ENCODE measurements at regions of chr15 and their contacts with region 1.

Region 1: DNA sequence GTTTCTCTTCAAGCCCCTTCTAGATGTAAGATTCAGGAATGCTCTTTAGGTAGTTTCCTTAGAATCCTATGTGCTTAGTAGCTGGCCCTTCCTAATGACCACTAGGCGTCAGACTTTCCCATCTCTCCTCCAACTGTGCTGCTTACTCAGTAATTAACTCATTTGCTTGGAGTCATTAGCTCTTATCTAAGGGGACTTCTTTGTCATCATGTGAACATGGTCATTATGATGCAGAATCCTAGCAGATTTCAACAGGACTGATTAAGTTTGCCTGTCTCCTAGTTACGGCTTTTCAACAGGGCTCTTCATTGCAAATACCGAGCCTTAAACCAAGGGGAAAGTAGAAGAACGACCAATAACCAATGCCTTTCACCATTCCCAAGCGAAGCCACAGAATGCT is 46.4 kb downstream of the GJD2 start:
- DNase-seq: peak; percentile 69
- H3K4me3 ChIP-seq: no peak overlapping the region
- H3K27ac ChIP-seq: no peak overlapping the region
- H3K4me1 ChIP-seq: no peaks in the 10 kb centered on the region
- H3K27me3 ChIP-seq: no peaks in the 10 kb centered on the region
- CTCF ChIP-seq: peak; percentile 64 to 71
- POLR2A ChIP-seq: no peak

Region 2: GRCh38 chr15:34610354-34610753 is 98.1 kb before region 1 on chr15:
- CTCF ChIA-PET with region 1: interaction called, 17 read pairs
- POLR2A ChIA-PET with region 1: no interaction called
- dilution Hi-C with region 1: no loop called
- intact Hi-C with region 1: no loop called
- DNase-seq: peak; percentile 39
- H3K4me3 ChIP-seq: no peak overlapping the region
- H3K27ac ChIP-seq: no peak overlapping the region
- H3K4me1 ChIP-seq: peaks cover 15% of the 10 kb centered on the region
- H3K27me3 ChIP-seq: no peaks in the 10 kb centered on the region
- CTCF ChIP-seq: peak in 1 of 2 donors; percentile 18
- POLR2A ChIP-seq: no peak

Region 3: DNA sequence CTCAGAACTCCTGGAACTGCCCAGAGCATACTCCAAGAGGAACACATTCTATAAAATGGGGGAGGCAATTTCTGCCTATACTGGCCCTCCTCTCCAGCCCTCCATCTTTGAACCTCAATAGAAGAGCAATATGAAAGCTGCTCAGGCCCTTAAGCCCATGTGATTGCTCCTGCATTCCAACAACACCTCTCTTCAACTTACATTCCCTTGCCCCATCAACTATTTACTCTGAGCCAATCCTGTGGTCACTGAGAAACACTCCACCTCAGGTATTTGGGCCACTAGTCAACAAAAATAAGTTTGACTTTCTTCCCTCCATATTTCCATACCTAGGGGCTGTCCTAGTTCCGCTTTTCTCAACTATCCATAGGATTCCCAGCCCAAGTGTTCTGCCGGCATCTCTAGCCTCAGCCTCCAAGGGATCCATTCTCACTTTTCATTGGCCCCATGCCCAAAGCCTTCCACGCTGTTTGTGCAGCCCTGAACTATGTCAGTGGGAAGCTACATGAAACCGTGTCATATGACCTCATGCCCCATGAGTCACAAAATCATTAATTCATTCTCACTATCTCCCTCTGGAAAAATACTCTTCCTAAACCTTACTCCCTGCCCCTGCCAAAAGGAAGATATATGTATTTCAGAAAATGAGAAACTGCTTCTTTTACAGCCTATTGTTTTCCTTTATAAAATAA is 15.2 kb before region 1 on chr15:
- CTCF ChIA-PET with region 1: interaction called, 18 read pairs
- POLR2A ChIA-PET with region 1: no interaction called
- dilution Hi-C with region 1: no loop called
- intact Hi-C with region 1: no loop called
- DNase-seq: peak; percentile 66
- H3K4me3 ChIP-seq: no peak overlapping the region
- H3K27ac ChIP-seq: no peak overlapping the region
- H3K4me1 ChIP-seq: peaks cover 7% of the 10 kb centered on the region
- H3K27me3 ChIP-seq: no peaks in the 10 kb centered on the region
- CTCF ChIP-seq: no peak
- POLR2A ChIP-seq: no peak

Region 4: GRCh38 chr15:34855397-34855796 is 147.0 kb after region 1 on chr15:
- CTCF ChIA-PET with region 1: interaction called, 8 read pairs
- POLR2A ChIA-PET with region 1: no interaction called
- dilution Hi-C with region 1: no loop called
- intact Hi-C with region 1: loop called (anchors 10 kb)
- DNase-seq: peak; percentile 91
- H3K4me3 ChIP-seq: no peak overlapping the region
- H3K27ac ChIP-seq: peak overlapping the region; percentile 5
- H3K4me1 ChIP-seq: peaks cover 28% of the 10 kb centered on the region
- H3K27me3 ChIP-seq: no peaks in the 10 kb centered on the region
- CTCF ChIP-seq: no peak
- POLR2A ChIP-seq: no peak

Region 5: GRCh38 chr15:34927726-34928125 is 219.3 kb after region 1 on chr15:
- CTCF ChIA-PET with region 1: interaction called, 56 read pairs
- POLR2A ChIA-PET with region 1: no interaction called
- dilution Hi-C with region 1: no loop called
- intact Hi-C with region 1: no loop called
- DNase-seq: peak; percentile 52
- H3K4me3 ChIP-seq: no peak overlapping the region
- H3K27ac ChIP-seq: no peak overlapping the region
- H3K4me1 ChIP-seq: no peaks in the 10 kb centered on the region
- H3K27me3 ChIP-seq: no peaks in the 10 kb centered on the region
- CTCF ChIP-seq: no peak
- POLR2A ChIP-seq: no peak

Measured in endothelial cell of umbilical vein (primary cell).